Activated T-helper 1 cell treated with anti-CD3 and anti-CD28 coated beads, Interleukin-12 subunit alpha, Interleukin-12 subunit beta, Interleukin-2, Interleukin-4 antibody, amounts not matched to agents 30 ng/mL and 10 ng/mL and 1 ng/mL, durations not matched to agents 14 hours and 24 hours and 36 hours (primary cell): ENCODE measurements at regions of chr17 and their contacts with region 1.

Region 1: GRCh38 chr17:62724398-62725146 is 83.5 kb downstream of the MARCHF10 start:
- DNase-seq: peak; percentile 45
- H3K4me3 Mint-ChIP-seq: peak overlapping the region; percentile 23
- H3K27ac Mint-ChIP-seq: peak overlapping the region; percentile 85
- H3K4me1 Mint-ChIP-seq: peaks cover 20% of the 10 kb centered on the region
- H3K27me3 Mint-ChIP-seq: peaks cover 85% of the 10 kb centered on the region

Region 2: DNA sequence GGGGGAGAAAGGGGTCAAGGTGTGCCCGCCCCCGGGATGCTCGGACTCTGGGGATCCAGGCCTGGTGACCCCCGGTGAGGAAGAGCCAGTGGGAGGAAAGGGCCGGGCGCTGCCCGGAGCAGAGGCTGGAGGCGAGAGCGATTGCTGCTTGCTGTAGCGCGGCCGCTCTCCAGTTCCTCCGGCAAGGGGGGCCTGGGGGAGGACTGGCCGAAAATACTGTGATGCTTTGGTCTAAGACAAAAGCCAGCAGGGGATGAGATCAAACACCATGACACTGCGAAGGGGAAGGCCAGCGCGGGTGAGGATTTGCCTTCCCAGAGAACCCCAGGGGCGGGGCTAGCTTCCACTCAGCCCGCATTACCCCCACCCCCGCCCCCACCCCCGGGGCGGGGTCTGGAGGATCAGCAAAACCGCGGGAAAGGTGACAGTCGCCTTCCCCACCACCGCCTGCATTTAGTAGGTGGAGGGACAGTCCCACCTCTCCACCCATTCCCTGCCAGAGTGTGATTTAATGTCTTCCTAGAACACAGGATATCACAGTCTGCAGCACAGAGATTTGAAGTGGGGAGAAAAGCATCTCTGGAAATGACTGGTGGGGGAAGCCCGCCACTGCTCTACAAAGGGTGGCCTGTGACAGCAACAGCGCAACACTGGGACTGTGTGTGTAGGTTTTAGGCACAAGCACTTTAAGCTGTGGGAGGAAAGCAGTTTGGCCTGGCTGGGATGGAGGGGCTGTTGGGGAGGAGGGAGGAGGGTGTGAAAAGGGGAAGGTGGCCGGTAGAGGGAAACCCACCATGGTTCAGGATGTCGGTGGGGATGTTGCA is 71.4 kb before region 1 on chr17:
- intact Hi-C with region 1: loop called (anchors 1 kb)
- DNase-seq: peak; percentile 78
- H3K4me3 Mint-ChIP-seq: peak overlapping the region; percentile 61
- H3K27ac Mint-ChIP-seq: peak overlapping the region; percentile 51
- H3K4me1 Mint-ChIP-seq: peaks cover 21% of the 10 kb centered on the region
- H3K27me3 Mint-ChIP-seq: peaks cover 77% of the 10 kb centered on the region

Region 3: GRCh38 chr17:62737513-62737912 is 12.9 kb after region 1 on chr17:
- intact Hi-C with region 1: loop called (anchors 1 kb)
- DNase-seq: no peak
- H3K4me3 Mint-ChIP-seq: no peak overlapping the region
- H3K27ac Mint-ChIP-seq: no peak overlapping the region
- H3K4me1 Mint-ChIP-seq: no peaks in the 10 kb centered on the region
- H3K27me3 Mint-ChIP-seq: peaks cover 44% of the 10 kb centered on the region